Activated B cell treated with CpG ODN at 0.5 μM for 24 hours (primary cell): ENCODE measurements at regions of chr17 and their contacts with region 1.

Region 1: GRCh38 chr17:75289115-75289831 is at the start of gene SLC25A19:
- DNase-seq: peak; percentile 86
- ATAC-seq: peak; percentile 86
- H3K4me3 Mint-ChIP-seq: peak within 1 kb of the TSS; percentile 94
- H3K27ac Mint-ChIP-seq: peak within 1 kb of the TSS; percentile 100
- H3K4me1 Mint-ChIP-seq: peaks cover 52% of the 10 kb centered on the region
- H3K27me3 Mint-ChIP-seq: no peaks in the 10 kb centered on the region
- CTCF ChIP-seq: no peak
- total RNA-seq, gene SLC25A19: 87.6 and 96.7 TPM in 2 replicates

Region 2: GRCh38 chr17:75250009-75250471 is 39.2 kb before region 1 on chr17:
- CTCF ChIA-PET with region 1: no interaction called
- POLR2A ChIA-PET with region 1: interaction called, 9 read pairs
- intact Hi-C with region 1: loop called (anchors 2 kb)
- DNase-seq: peak; percentile 46
- ATAC-seq: peak; percentile 88
- H3K4me3 Mint-ChIP-seq: peak overlapping the region; percentile 76
- H3K27ac Mint-ChIP-seq: peak overlapping the region; percentile 87
- H3K4me1 Mint-ChIP-seq: peaks cover 65% of the 10 kb centered on the region
- H3K27me3 Mint-ChIP-seq: no peaks in the 10 kb centered on the region
- CTCF ChIP-seq: no peak

Region 3: GRCh38 chr17:75313941-75314551 is 24.8 kb after region 1 on chr17:
- CTCF ChIA-PET with region 1: interaction called, 49 read pairs
- POLR2A ChIA-PET with region 1: interaction called, 1,048 read pairs
- intact Hi-C with region 1: no loop called
- DNase-seq: no peak
- ATAC-seq: peak; percentile 42
- H3K4me3 Mint-ChIP-seq: no peak overlapping the region
- H3K27ac Mint-ChIP-seq: peak overlapping the region; percentile 89
- H3K4me1 Mint-ChIP-seq: peaks cover 77% of the 10 kb centered on the region
- H3K27me3 Mint-ChIP-seq: no peaks in the 10 kb centered on the region
- CTCF ChIP-seq: no peak

Region 4: DNA sequence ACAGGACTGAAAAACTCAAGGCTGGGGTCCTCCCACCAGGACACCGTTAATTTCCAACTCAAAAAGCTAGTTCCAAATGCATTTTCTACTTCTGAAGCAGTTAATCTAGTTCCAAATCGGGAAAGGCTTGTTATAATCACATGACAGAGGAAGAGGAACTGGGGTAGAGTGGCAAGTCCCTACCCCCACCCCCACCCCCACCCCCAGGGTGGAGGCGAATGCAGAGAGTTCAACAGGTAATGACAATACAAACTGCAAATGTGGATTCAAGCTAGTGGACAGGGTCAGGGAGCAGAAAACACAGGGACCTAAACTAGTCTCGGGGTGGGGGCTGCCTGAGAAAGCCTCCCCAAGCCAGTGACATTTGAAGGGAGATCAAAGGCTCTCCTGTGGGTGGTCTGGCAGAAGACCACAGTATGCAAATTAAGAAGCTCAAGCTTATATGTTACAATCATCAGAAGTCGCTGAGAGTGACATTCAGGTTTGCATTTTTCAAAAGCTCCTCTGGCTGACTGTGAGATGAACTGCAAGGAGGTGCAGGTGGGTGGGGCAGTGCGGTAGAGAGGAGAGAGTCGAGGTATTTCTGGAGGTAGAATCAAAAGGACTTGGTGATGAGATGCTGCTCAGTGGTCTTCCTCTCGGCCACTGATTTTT is 56.4 kb after region 1 on chr17:
- CTCF ChIA-PET with region 1: interaction called, 10 read pairs
- POLR2A ChIA-PET with region 1: interaction called, 70 read pairs
- intact Hi-C with region 1: loop called (anchors 1 kb)
- DNase-seq: peak; percentile 63
- ATAC-seq: peak; percentile 83
- H3K4me3 Mint-ChIP-seq: peak overlapping the region; percentile 89
- H3K27ac Mint-ChIP-seq: peak overlapping the region; percentile 92
- H3K4me1 Mint-ChIP-seq: peaks cover 97% of the 10 kb centered on the region
- H3K27me3 Mint-ChIP-seq: no peaks in the 10 kb centered on the region
- CTCF ChIP-seq: no peak

Region 5: DNA sequence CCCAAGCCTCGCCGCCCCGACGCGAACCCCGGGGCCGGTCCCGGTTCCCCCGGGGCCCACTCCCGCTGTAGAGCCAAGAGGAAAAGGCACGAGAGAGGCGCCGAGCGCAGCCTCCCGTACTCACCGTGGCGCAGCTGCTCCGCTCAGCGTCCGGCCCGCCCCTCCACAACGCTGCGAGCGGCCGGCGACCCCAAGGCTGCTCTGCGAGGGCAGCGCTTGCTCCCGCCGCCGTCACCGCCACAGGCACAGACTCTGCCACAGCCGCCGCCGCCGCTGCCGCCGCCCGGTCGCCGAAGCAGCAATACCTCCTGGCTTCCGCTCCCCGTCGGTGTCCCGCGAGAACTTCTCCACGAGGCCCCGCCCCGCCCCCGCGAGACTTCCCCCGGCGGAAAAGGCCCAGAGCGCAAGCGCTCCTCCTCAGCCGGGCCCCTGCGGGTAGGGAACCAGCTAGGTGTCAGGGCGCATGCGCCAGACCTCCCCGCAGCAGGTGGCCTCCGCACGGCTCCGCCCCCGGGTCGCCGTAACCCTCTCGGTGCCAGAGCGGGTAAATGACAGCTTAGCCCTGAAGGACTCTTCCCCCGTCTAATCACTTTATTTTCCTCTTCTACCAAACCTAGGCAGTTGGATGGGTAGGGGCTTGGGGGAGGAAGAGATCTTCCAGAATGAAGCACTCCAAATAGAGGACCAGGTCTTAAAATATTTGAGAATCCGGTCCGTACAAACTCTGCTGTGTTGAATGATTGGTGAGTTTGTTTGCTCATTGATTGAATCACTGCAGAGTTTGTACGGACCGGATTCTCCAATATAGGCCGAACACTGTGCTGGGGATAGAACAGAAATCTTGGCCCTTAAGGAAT is 116.3 kb after region 1 on chr17 and contains the start of gene GRB2:
- CTCF ChIA-PET with region 1: interaction called, 17 read pairs
- POLR2A ChIA-PET with region 1: interaction called, 136 read pairs
- intact Hi-C with region 1: loop called (anchors 1 kb)
- DNase-seq: peak; percentile 100
- ATAC-seq: peak; percentile 81
- H3K4me3 Mint-ChIP-seq: peak within 1 kb of the TSS; percentile 99
- H3K27ac Mint-ChIP-seq: peak within 1 kb of the TSS; percentile 97
- H3K4me1 Mint-ChIP-seq: peaks cover 43% of the 10 kb centered on the region
- H3K27me3 Mint-ChIP-seq: no peaks in the 10 kb centered on the region
- CTCF ChIP-seq: no peak
- total RNA-seq, gene GRB2: 307 and 320 TPM in 2 replicates

Region 6: GRCh38 chr17:75515496-75516254 is 226.4 kb after region 1 on chr17 and contains the start of gene CASKIN2:
- CTCF ChIA-PET with region 1: interaction called, 5 read pairs
- POLR2A ChIA-PET with region 1: interaction called, 3 read pairs
- intact Hi-C with region 1: loop called (anchors 1 kb)
- DNase-seq: peak; percentile 80
- ATAC-seq: peak; percentile 68
- H3K4me3 Mint-ChIP-seq: peak within 1 kb of the TSS; percentile 82
- H3K27ac Mint-ChIP-seq: no peak within 1 kb of the TSS
- H3K4me1 Mint-ChIP-seq: peaks cover 22% of the 10 kb centered on the region
- H3K27me3 Mint-ChIP-seq: no peaks in the 10 kb centered on the region
- CTCF ChIP-seq: peak; percentile 43
- total RNA-seq, gene CASKIN2: 1.2 and 1.4 TPM in 2 replicates